ENCODE measurements at regions of chr17 and their contacts with region 1.

Region 1: GRCh38 chr17:81512560-81513371 is at the start of gene ACTG1:
- DNase-seq: peak; percentile 69 to 94
- H3K4me3 ChIP-seq: peak within 1 kb of the TSS; percentile 81
- H3K27ac ChIP-seq: peak within 1 kb of the TSS; percentile 96
- H3K4me1 ChIP-seq: peaks cover 16% of the 10 kb centered on the region
- H3K27me3 ChIP-seq: no peaks in the 10 kb centered on the region
- CTCF ChIP-seq: no peak
- total RNA-seq, gene ACTG1: 3,629 and 4,502 TPM in 2 replicates

Region 2: GRCh38 chr17:81142301-81143199 is 370.2 kb before region 1 on chr17:
- CTCF ChIA-PET with region 1: no interaction called
- POLR2A ChIA-PET with region 1: interaction called, 11 read pairs
- intact Hi-C with region 1: no loop called
- DNase-seq: peak; percentile 42 to 87
- H3K4me3 ChIP-seq: no peak overlapping the region
- H3K27ac ChIP-seq: no peak overlapping the region
- H3K4me1 ChIP-seq: no peaks in the 10 kb centered on the region
- H3K27me3 ChIP-seq: no peaks in the 10 kb centered on the region
- CTCF ChIP-seq: peak; percentile 67

Region 3: GRCh38 chr17:81491761-81492160 is 21.0 kb before region 1 on chr17:
- CTCF ChIA-PET with region 1: no interaction called
- POLR2A ChIA-PET with region 1: interaction called, 22 read pairs
- intact Hi-C with region 1: no loop called
- DNase-seq: no peak
- H3K4me3 ChIP-seq: no peak overlapping the region
- H3K27ac ChIP-seq: no peak overlapping the region
- H3K4me1 ChIP-seq: no peaks in the 10 kb centered on the region
- H3K27me3 ChIP-seq: no peaks in the 10 kb centered on the region
- CTCF ChIP-seq: no peak

Region 4: GRCh38 chr17:81607431-81607830 is 94.7 kb after region 1 on chr17:
- CTCF ChIA-PET with region 1: no interaction called
- POLR2A ChIA-PET with region 1: interaction called, 27 read pairs
- intact Hi-C with region 1: no loop called
- DNase-seq: no peak
- H3K4me3 ChIP-seq: no peak overlapping the region
- H3K27ac ChIP-seq: no peak overlapping the region
- H3K4me1 ChIP-seq: no peaks in the 10 kb centered on the region
- H3K27me3 ChIP-seq: no peaks in the 10 kb centered on the region
- CTCF ChIP-seq: no peak

Region 5: GRCh38 chr17:81631482-81631881 is 118.7 kb after region 1 on chr17:
- CTCF ChIA-PET with region 1: no interaction called
- POLR2A ChIA-PET with region 1: interaction called, 14 read pairs
- intact Hi-C with region 1: no loop called
- DNase-seq: no peak
- H3K4me3 ChIP-seq: no peak overlapping the region
- H3K27ac ChIP-seq: no peak overlapping the region
- H3K4me1 ChIP-seq: peaks cover 6% of the 10 kb centered on the region; the same call in 1 of the 2 replicates
- H3K27me3 ChIP-seq: no peaks in the 10 kb centered on the region
- CTCF ChIP-seq: no peak

Region 6: DNA sequence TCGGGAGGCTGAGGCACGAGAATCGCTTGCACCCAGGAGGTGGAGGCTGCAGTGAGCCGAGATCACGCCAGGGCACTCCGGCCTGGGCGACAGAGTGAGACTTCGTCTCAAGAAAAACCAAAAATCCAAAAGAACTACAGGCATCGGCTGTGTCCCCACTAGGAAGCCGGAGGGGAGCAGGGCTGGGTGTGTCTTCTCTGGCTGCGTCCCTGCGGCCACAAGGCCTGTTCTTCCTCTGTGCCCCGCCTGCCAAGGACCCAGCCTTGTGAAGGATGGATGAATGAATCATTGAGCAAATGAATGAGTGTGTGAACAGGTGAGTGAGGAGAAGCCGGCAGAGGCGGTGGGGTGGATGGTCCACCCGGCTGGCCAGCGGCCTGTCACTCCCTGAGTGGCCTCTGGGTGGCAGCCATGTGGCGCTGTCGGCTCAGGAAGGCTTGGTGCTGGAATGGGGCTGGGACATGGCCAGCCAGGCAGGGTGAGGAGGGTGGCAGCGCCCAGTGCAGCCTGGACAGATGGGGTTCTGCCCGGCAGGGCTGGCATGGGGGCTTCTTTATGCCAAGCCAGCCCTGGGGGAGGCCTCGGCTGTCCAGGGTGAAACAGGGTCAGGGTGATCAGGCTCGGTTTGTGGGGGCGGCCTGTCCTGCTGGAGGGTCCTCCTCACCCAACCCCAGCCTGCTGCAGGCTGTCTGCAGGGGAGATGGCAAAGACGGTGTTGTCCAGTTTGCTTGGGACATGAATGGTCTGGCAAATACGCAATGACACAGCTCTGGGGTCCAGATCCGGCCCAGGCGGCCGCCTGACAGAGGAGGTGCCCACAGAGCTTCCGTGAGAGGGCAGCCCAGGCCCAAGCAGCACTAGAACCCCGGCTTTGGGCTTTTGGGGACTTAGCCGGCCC is 221.0 kb after region 1 on chr17:
- CTCF ChIA-PET with region 1: no interaction called
- POLR2A ChIA-PET with region 1: no interaction called
- intact Hi-C with region 1: no loop called
- DNase-seq: peak; percentile 55 to 92
- H3K4me3 ChIP-seq: no peak overlapping the region
- H3K27ac ChIP-seq: no peak overlapping the region
- H3K4me1 ChIP-seq: no peaks in the 10 kb centered on the region
- H3K27me3 ChIP-seq: no peaks in the 10 kb centered on the region
- CTCF ChIP-seq: peak; percentile 81